PC-9 (cell line): ENCODE measurements at regions of chr2 and their contacts with region 1.

Region 1: GRCh38 chr2:237858294-237859081 is 935 bp upstream of the RAMP1 start:
- DNase-seq: peak; percentile 78 to 88
- H3K4me3 ChIP-seq: peak overlapping the region; percentile 64
- H3K27ac ChIP-seq: no peak overlapping the region
- H3K4me1 ChIP-seq: peaks cover 42% of the 10 kb centered on the region
- H3K27me3 ChIP-seq: no peaks in the 10 kb centered on the region
- CTCF ChIP-seq: peak; percentile 93

Region 2: GRCh38 chr2:237766340-237766739 is 92.1 kb before region 1 on chr2:
- CTCF ChIA-PET with region 1: no interaction called
- POLR2A ChIA-PET with region 1: interaction called, 11 read pairs
- intact Hi-C with region 1: no loop called
- DNase-seq: no peak
- H3K4me3 ChIP-seq: no peak overlapping the region
- H3K27ac ChIP-seq: no peak overlapping the region
- H3K4me1 ChIP-seq: no peaks in the 10 kb centered on the region; the same call in 1 of the 2 replicates
- H3K27me3 ChIP-seq: no peaks in the 10 kb centered on the region
- CTCF ChIP-seq: no peak

Region 3: DNA sequence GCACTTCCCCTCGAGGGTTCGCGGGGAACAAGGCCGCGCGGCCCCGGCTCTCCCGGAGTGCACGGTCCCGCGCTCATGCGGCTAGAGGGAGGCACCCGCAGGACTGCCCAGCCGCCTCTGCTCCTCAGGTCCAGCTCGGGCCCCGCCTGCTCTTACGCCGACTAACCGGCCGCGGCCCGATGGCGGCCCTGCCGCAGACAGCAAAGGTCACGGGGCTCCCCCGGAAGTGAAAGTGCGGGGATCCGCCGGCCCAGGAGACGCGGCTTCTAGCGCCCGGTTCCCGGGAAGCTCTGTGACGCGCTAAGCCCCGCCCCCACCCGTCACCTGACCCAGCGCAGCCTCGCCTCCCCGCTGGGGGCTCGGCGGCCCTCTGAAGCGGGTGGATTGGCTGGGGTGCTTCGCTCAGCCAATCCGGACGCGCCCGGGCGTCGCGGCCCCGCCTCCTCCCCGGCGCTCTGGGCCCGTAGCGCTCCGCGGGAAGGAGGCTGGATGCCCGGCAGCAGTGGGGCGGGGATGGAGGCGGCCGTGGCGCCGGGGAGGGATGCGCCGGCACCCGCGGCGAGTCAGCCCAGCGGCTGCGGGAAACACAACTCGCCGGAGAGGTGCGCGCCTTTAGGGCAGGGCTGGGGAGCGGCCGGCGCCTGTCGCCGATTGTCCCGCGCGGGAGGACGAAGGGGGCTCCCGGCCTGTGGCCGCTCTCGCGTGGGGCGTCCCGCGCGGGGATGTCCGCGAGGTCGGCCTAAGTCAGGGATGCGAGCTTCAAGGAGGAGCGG is 202.2 kb after region 1 on chr2 and contains the start of gene SCLY:
- CTCF ChIA-PET with region 1: no interaction called
- POLR2A ChIA-PET with region 1: no interaction called
- intact Hi-C with region 1: loop called (anchors 2 kb)
- DNase-seq: peak; percentile 95 to 99
- H3K4me3 ChIP-seq: peak within 1 kb of the TSS; percentile 98
- H3K27ac ChIP-seq: peak within 1 kb of the TSS; percentile 67
- H3K4me1 ChIP-seq: peaks cover 17% of the 10 kb centered on the region
- H3K27me3 ChIP-seq: no peaks in the 10 kb centered on the region
- CTCF ChIP-seq: no peak; the same call in 1 of the 2 replicates
- total RNA-seq, gene SCLY: 33.9 and 40.0 TPM in 2 replicates

Region 4: DNA sequence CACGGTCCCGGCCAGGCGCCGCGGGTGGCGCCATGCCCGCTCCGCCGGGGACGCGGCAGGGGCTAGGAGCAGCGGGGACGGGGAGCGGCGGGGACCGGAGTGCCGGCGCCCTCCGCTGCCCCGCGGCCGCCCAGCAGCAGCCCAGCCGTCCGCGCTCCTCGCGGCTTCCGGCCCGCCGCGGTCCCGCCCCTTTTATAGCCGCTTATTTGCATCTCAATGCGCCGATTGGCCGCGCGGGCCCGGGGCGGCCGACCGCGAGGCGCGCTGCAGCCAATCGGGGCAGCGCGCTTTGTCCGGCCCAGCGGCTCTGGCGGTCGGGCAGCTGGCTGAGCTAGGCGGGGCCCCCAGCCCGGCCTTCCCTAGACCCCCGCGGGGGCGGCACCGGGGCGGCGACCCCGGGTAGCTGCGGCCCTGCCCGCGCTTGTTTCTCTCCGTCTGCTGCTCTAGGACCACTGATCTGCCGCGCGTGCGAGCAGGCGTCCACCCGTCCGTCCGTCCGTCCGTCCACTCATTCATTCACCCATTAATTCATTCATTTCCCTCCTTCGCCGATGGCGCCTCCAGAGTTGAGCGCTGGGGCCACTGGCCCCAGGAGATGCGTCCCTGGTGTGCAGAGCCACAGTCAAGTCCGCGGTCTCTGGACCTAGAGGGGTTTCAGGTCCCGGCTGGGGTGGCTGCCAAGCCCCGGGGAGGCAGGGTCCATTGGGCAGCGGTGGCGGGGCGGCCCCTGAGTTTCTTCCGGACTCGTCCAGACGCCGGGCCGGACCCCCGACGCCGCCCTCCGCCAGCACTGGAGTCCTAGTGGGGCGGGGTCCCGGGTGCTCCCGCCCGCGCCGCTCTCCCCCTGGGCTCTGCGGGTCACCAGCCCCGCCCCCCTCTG is 381.6 kb after region 1 on chr2 and contains the start of gene HES6:
- CTCF ChIA-PET with region 1: no interaction called
- POLR2A ChIA-PET with region 1: no interaction called
- intact Hi-C with region 1: loop called (anchors 5 kb)
- DNase-seq: peak; percentile 82 to 94
- H3K4me3 ChIP-seq: peak within 1 kb of the TSS; percentile 63
- H3K27ac ChIP-seq: no peak within 1 kb of the TSS
- H3K4me1 ChIP-seq: no peaks in the 10 kb centered on the region; the same call in 1 of the 2 replicates
- H3K27me3 ChIP-seq: peaks cover 30% of the 10 kb centered on the region
- CTCF ChIP-seq: no peak
- total RNA-seq, gene HES6: 8.4 and 14.3 TPM in 2 replicates

Region 5: DNA sequence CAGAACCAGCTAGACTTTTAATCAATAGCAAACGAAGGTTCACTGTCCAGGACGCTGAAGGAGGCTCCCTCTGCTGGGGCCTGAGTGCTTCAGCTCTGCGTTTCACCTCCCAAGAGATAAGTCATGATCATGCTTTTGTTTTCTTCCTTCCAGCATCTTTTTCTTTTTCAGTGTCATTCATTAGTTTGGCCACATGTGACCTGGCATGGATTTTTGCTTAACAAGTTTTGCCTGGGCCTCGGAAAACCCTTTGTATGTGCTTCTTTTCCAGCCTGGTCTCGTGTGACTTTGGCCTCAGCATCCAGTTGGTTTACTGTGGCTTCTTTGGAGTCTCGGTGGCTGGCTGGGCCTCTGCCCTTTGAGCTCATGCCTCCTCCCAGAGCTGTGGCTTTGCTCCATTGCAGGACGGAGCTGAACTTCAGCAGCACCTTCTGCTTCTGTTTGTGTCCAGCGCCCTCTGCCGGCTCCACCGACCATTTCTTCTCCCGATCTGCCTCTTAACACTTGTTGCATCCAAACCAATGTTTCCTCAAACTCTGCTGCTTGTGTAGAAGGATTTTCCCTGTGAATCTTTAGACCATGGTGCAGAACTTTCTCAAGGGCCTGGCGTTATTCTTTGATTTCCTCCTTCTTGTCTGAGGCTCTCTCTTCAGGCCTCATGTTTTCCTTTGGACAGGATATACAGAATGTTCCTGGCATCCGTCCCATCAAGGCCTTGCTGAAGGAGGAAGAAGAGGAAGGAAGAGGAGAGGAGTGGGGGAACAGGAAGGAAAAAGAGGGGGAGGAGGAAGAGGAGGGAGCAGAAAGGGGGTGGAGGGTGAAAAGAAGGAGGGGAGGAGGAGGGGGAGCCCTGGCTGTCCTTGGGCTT is 404.9 kb after region 1 on chr2:
- CTCF ChIA-PET with region 1: interaction called, 10 read pairs
- POLR2A ChIA-PET with region 1: no interaction called
- intact Hi-C with region 1: loop called (anchors 1 kb)
- DNase-seq: peak; percentile 64 to 87
- H3K4me3 ChIP-seq: no peak overlapping the region
- H3K27ac ChIP-seq: no peak overlapping the region
- H3K4me1 ChIP-seq: 0 out of 2 replicates have a peak, but pooled peaks cover 5% of the 10 kb centered on the region
- H3K27me3 ChIP-seq: no peaks in the 10 kb centered on the region
- CTCF ChIP-seq: peak; percentile 94

Region 6: DNA sequence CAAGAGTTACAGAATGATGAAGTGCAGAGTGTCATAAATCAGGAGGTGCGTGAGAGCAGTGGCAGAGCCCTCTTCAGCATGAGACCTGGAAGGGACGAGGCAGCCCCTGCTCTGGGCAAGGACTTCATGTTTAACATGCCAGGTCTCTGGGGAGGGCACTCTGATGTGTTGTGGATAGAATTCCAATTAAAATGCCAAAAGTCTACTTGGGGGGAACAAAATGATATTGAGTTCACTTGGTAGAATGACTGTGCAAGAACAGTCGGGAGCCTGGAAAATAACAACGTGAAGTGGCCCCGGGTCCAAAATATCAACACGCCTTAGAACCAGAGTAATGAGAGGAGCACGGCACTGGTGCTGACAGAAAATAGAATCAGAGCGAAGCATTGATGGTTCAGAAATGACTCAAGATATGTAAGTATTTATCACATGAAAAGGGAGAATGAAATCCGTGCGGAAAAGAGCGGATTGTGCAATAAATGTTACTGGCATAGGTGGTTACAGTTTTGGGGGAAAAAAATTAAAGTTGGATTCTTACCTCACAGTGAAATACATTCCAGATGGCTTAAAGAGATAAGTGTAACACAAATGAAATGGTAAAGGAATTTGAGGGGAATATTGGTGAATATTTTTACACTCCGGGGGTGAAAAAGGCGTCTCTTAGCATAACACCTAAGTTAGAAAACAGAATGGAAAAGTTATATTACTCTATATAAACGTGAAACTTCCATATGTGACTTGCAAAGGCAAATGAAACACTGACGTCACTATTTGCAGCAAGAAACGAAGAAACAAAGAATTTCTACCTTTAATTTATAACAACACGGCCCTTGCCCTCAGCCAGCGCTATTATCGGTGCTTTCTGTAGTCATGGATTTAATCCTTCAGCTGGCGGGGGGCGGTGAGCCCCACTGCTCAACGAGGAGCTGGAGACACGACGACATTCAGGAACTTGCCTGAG is 830.0 kb after region 1 on chr2:
- CTCF ChIA-PET with region 1: no interaction called
- POLR2A ChIA-PET with region 1: no interaction called
- intact Hi-C with region 1: no loop called
- DNase-seq: no peak
- H3K4me3 ChIP-seq: no peak overlapping the region
- H3K27ac ChIP-seq: no peak overlapping the region
- H3K4me1 ChIP-seq: peaks cover 34% of the 10 kb centered on the region
- H3K27me3 ChIP-seq: peaks cover 46% of the 10 kb centered on the region
- CTCF ChIP-seq: no peak